Spleen (tissue), 13 donors: ENCODE measurements at regions of chr10 and their contacts with region 1.

Region 1: GRCh38 chr10:52308251-52309031 is 5.6 kb upstream of the DKK1 start:
- DNase-seq: peak; percentile 74
- H3K4me3 ChIP-seq: peak overlapping the region; percentile 1 to 63 (median 33)
- H3K27ac ChIP-seq: no peak overlapping the region
- H3K4me1 ChIP-seq: peaks cover 5 to 22% (median 13%) of the 10 kb centered on the region in 6 donors
- H3K27me3 ChIP-seq: peaks cover 4 to 56% (median 25%) of the 10 kb centered on the region in 7 donors
- CTCF ChIP-seq: peak in 10 of 11 experiments; percentile 17 to 71 (median 48)
- POLR2A ChIP-seq: no peak

Region 2: DNA sequence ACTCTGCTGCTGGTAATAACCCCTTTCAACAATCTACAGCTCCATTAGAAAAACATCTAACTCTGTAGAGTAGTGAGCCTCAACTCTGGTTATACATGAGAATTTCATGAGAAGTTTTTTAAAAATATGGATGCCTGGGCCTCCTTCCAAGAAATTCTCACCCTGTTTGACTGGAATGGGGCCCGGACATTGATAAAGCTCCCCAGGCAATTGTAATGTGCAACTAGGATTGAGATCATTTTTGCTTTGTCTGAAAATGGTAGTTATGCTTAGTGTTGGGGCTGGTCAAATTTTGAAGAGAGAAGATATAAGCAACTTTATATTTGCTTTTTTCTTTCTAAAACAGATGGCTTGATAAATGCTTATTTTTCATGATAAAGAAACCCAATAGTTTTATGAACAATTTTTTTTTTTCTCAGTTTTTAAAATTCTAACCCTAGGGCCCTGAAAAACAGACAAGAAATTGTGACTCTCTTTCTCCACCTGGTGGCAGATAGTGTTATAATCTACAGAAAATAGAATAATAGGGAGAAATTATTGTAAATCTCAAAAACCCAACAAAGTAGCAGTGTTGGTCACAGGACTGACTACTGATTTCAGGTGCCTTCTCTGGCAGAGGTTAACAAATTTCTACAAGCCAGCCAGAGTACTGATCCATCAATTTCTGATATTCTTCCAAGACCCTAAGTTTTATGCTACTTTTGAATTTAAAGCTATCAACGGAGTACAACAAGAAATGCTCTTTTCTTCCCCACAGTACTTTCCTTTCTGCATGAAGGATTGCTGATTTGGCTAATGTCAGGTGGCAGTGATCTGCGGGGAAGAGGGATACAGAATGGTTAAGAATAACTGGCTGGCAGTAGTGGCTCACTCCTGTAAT is 180.4 kb after region 1 on chr10:
- intact Hi-C with region 1: loop called (anchors 5 kb)
- DNase-seq: no peak
- H3K4me3 ChIP-seq: no peak overlapping the region
- H3K27ac ChIP-seq: no peak overlapping the region
- H3K4me1 ChIP-seq: no peaks in the 10 kb centered on the region
- H3K27me3 ChIP-seq: no peaks in the 10 kb centered on the region
- CTCF ChIP-seq: peak in 7 of 11 experiments; percentile 17 to 52 (median 34)
- POLR2A ChIP-seq: no peak